ENCODE measurements at regions of chr2 and their contacts with region 1.

Region 1: GRCh38 chr2:224039124-224039940 is at the start of gene SERPINE2:
- DNase-seq: peak; percentile 55 to 71 (median 60)
- ATAC-seq: peak; percentile 52 to 82 (median 78)
- H3K4me3 ChIP-seq: peak within 1 kb of the TSS; percentile 56 to 88 (median 70)
- H3K27ac ChIP-seq: peak within 1 kb of the TSS in 11 of 12 donors; percentile 30 to 79 (median 50)
- H3K4me1 ChIP-seq: peaks cover 0 to 28% (median 7%) of the 10 kb centered on the region in 12 donors
- H3K27me3 ChIP-seq: peaks cover 0 to 53% (median 15%) of the 10 kb centered on the region in 9 donors
- CTCF ChIP-seq: peak in 9 of 12 donors; percentile 21 to 54 (median 41)
- POLR2A ChIP-seq: peak in 1 of 2 donors; percentile 36
- total RNA-seq, gene SERPINE2: 10.7 to 61.7 (median 22.1) TPM

Region 2: GRCh38 chr2:223957092-223957851 is 82.1 kb before region 1 on chr2 and contains the start of gene MRPL44:
- intact Hi-C with region 1: no loop called
- DNase-seq: peak; percentile 96 to 99 (median 97)
- ATAC-seq: peak; percentile 100
- H3K4me3 ChIP-seq: peak within 1 kb of the TSS; percentile 54 to 98 (median 90)
- H3K27ac ChIP-seq: peak within 1 kb of the TSS; percentile 53 to 95 (median 84)
- H3K4me1 ChIP-seq: peaks cover 12 to 55% (median 44%) of the 10 kb centered on the region in 12 donors
- H3K27me3 ChIP-seq: no peaks in the 10 kb centered on the region
- CTCF ChIP-seq: peak in 3 of 12 donors; percentile 7 to 20 (median 15)
- POLR2A ChIP-seq: peak in 1 of 2 donors; percentile 73
- total RNA-seq, gene MRPL44: 33.4 to 54.2 (median 38.2) TPM

Region 3: DNA sequence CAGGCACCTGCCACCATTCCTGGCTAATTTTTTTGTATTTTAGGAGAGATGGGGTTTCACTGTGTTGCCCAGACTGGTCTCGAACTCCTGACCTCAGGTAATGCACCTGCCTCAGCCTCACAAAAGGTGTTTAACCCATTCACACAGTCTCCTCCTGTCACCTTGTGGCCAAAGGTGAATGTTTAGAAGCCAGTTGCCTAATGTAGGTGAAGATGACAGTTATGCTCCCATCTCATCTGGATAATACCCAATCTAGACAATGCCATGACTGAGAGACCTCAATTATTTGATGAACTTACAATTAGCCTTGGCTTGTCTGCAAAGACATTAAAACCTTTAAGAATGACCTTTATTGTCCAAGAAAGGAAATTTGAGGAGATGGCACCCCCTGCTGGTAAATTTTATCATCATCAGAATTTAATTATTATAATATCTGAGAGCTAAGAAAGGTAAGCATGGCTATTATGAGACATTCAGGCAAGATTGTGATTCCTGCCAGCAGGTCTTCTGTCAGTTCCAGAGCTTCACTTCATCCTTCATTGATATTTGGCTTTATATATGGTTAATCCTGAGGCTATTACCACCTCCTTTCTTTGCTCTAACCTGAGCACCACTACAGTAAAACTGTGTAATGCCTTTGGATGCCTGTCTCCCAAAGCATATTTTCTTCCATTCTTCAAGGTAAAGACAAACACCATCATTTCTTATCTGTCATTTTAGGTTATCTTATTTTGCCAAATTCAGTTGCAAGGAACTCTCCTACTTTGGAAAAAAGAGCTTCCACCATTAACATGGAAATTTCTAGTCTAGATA is 245.0 kb after region 1 on chr2:
- intact Hi-C with region 1: loop called in 5 of 10 experiments (anchors 2 to 5 kb)
- DNase-seq: no peak
- ATAC-seq: peak in 1 of 4 donors; percentile 47
- H3K4me3 ChIP-seq: no peak overlapping the region
- H3K27ac ChIP-seq: no peak overlapping the region
- H3K4me1 ChIP-seq: peaks cover 0 to 15% (median 0%) of the 10 kb centered on the region in 12 donors
- H3K27me3 ChIP-seq: peaks cover 0 to 16% (median 2%) of the 10 kb centered on the region in 9 donors
- CTCF ChIP-seq: peak; percentile 53 to 84 (median 66)
- POLR2A ChIP-seq: no peak